ENCODE measurements at regions of chr15 and their contacts with region 1.

Region 1: GRCh38 chr15:99090011-99090699 is 14.7 kb upstream of the SYNM start:
- DNase-seq: no peak

Region 2: DNA sequence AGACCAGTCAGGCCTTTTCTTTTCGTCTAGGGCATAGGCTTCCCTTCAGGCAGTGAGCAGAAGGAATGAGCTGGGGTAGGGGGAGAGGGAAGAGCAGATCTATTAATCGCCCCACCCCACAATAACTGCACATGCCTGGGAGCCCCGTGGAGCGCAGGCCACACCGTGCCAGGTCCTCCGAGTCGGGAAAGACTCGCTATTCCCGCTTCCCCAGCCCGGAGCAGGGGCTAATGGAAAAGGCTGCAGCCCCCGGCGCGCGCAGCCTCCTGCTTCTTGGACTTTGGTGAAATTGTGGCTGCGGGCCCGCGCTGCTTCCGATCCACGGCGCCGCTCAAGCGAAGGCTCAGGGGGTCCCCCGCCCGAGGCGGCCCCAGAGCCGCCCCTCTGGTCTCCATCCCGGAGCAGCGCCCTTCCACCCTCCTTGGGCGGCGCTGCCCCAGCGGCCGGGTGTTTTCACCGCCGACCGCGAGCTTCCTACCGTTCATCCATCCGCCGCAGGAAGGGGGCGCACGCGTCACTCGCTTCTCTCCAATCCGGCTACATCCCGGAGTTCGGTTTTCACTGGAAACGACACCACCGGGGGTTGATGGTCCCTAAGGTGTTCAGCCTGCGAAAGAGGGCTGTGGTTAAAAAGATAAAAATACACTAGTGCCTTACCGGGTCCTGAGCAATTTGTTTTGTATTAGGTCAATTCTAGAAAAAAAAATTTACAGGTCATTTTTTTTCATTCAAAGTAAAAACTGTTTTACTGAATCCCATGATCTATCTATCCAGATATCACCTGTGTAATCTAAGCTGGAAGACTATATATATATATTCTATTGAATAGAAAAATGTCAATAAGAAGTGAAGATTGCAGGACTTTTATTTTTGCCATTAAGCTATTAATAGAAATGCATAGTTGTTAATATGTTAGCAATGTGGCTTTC is 10.4 kb after region 1 on chr15:
- CTCF ChIA-PET with region 1: interaction called, 12 read pairs
- POLR2A ChIA-PET with region 1: no interaction called
- DNase-seq: peak; percentile 86

Region 3: DNA sequence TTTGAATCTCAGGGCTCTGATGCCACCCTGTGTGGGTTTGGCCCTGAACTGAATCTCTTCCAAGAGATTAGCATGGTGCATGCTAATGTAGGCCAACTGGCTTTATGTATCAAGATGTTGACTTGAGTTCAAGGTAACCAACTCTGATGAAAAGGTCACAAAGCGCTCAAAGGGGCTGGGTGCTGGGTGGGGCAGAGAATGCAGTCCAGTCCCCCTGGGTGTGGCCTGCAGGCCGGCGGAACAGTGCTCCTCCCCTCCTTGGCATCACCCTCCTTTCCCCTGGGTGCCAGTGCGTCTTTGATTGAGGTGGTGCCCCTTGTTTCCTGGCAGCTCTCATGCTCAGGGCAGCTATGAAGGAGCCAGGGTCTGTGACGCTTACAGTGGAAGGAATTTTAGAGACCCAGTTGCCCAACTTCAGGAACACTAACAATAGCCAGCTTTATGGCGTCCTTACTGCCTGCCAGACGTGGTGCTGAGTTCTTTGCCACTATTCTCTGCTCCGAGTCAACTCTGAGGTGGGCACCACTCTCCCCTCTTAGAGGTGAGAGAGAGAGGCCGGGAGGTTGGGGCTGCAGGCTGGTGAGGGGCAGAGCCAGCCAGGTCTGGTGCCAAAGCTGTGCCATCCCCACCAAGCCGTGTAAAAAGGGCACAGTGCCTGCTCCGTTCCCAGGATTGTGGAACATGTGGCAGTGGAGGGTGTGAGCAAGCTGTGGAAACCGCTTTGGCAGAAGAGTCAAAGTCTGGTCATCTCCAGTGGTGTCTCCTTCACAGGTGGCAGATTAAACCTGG is 24.6 kb after region 1 on chr15:
- CTCF ChIA-PET with region 1: no interaction called
- POLR2A ChIA-PET with region 1: no interaction called
- DNase-seq: no peak

Region 4: GRCh38 chr15:99125061-99125891 is 35.1 kb after region 1 on chr15:
- CTCF ChIA-PET with region 1: no interaction called
- POLR2A ChIA-PET with region 1: no interaction called
- DNase-seq: no peak

Region 5: DNA sequence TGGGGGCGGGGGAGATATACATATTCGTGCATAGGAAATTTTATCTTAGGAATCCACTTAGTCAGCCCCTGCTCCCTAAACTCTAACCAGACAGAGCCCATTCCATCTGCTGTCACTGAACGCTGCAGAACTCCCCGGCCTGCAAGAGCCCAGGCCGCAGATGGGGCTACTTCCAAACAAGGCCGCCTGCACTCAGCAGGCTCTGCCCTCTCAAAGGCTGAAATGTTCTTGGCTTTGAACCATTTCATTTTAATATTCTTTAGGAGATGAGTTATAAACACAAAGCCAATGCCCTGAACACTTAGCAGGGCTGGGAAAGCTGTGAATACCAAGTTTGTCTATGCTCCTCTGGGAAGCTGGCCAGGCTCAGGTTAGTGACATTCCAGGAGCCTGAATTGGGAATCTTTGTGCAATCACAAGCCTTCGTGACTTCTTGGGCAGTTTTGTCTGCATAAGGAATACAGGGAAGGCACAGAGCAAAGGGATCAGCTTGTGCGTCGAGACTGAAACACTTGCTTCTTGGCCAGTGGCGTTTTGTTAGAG is 79.7 kb after region 1 on chr15:
- CTCF ChIA-PET with region 1: no interaction called
- POLR2A ChIA-PET with region 1: no interaction called
- DNase-seq: no peak

Measured in HEK293T (cell line).